ENCODE measurements at regions of chr16 and their contacts with region 1.

Region 1: DNA sequence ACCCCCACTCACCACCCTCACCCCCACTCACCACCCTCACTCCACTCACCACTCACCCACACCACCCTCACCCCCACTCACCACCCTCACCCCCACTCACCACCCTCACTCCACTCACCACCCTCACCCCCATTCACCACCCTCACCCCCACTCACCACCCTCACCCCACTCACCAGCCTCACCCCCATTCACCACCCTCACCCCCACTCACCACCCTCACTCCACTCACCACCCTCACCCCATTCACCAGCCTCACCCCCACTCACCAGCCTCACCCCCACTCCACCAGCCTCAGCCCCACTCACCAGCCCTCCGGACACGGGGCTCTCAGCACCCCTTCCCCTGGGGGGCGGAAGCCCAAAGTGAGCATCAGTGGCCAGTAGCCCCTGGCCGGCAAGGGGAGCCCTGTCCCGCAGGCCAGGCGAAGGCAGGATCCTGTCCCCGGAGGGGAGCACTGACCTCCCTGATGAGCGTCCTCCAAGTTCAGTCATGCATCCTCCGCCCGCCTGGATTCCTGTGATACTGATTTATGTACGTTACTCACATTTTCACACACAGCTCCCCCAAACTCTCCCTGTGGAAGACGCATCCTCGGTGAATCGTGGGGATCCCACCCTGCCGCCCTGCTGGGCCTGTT is 18.0 kb upstream of the C1QTNF8 start:
- DNase-seq: no peak

Region 2: GRCh38 chr16:1182316-1182671 is 68.3 kb after region 1 on chr16:
- in situ Hi-C with region 1: loop called (anchors 5 kb)
- DNase-seq: no peak